Activated CD8-positive, alpha-beta T cell treated with anti-CD3 and anti-CD28 coated beads, Interleukin-2, amount 10 ng/mL, durations not matched to agents 7 days and 5 days (primary cell): ENCODE measurements at regions of chr1 and their contacts with region 1.

Region 1: DNA sequence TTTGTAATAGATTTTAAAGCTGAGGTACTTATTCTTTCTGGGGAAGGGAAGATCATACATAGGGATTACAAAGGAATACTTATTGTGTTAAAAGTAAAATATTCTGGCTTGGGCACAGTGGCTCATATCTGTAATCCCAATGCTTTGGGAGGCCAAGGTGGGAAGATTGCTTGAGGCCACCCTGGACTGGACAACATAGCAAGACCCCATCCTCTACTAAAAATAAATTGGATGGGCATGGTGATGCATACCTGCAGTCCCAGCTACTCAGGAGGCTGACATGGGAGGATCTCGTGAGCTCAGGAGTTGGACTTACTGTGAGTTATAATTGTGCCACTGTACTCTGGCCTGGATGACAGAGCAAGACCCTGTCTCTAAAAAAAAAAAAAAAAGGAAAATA is 27.6 kb downstream of the GABPB2 start:
- DNase-seq: no peak
- ATAC-seq: no peak
- H3K4me3 Mint-ChIP-seq: no peak overlapping the region
- H3K27ac Mint-ChIP-seq: no peak overlapping the region
- H3K4me1 Mint-ChIP-seq: no peaks in the 10 kb centered on the region
- H3K27me3 Mint-ChIP-seq: no peaks in the 10 kb centered on the region

Region 2: DNA sequence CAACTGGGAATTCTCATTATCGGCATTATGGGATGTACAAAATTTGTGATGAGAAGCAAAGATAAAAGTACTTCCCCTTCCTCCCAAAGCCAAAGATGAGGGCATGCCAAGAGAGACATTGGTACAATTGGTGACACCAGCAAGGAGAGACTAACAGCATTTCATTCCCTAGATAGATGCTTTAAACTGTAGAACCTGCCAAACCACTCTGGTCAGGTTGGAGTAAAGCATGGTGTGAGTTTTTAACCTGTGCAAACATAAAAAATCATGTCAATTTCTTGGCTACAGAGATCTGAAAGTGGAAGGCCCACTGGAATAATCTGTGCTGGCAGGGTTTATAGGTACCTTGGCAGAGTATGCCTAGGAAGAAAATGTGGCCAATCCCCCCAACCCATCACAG is 191.8 kb before region 1 on chr1:
- CTCF ChIA-PET with region 1: no interaction called
- POLR2A ChIA-PET with region 1: no interaction called
- DNase-seq: no peak
- ATAC-seq: no peak
- H3K4me3 Mint-ChIP-seq: no peak overlapping the region
- H3K27ac Mint-ChIP-seq: no peak overlapping the region
- H3K4me1 Mint-ChIP-seq: no peaks in the 10 kb centered on the region
- H3K27me3 Mint-ChIP-seq: peaks cover 2% of the 10 kb centered on the region

Region 3: DNA sequence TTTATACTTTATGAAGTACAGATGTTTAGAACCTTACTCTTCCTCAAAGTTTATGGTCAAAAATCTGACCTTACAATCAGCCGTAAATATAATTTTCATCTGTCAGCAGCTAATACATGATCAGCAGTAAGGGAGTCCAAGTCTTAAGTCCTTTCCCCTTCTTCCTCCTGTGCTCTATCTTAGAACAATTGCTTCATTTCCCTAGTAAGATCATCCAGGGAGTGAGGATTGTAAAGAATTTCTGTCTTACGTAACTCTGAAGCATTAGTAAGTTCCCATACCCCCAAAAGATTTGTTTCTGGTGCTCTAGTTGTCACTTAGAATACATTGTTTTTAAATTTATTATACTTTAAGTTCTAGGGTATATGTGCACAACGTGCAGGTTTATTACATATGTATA is 169.8 kb before region 1 on chr1:
- CTCF ChIA-PET with region 1: no interaction called
- POLR2A ChIA-PET with region 1: no interaction called
- DNase-seq: no peak
- ATAC-seq: no peak
- H3K4me3 Mint-ChIP-seq: peak overlapping the region; percentile 27
- H3K27ac Mint-ChIP-seq: no peak overlapping the region
- H3K4me1 Mint-ChIP-seq: peaks cover 14% of the 10 kb centered on the region
- H3K27me3 Mint-ChIP-seq: no peaks in the 10 kb centered on the region

Region 4: GRCh38 chr1:151070474-151071276 is 27.5 kb before region 1 on chr1 and contains the start of gene GABPB2:
- CTCF ChIA-PET with region 1: interaction called, 18 read pairs
- POLR2A ChIA-PET with region 1: no interaction called
- DNase-seq: peak; percentile 88
- ATAC-seq: peak; percentile 87
- H3K4me3 Mint-ChIP-seq: peak within 1 kb of the TSS; percentile 98
- H3K27ac Mint-ChIP-seq: peak within 1 kb of the TSS; percentile 100
- H3K4me1 Mint-ChIP-seq: peaks cover 15% of the 10 kb centered on the region
- H3K27me3 Mint-ChIP-seq: no peaks in the 10 kb centered on the region
- total RNA-seq, gene GABPB2: 32.7 to 34.4 TPM

Region 5: DNA sequence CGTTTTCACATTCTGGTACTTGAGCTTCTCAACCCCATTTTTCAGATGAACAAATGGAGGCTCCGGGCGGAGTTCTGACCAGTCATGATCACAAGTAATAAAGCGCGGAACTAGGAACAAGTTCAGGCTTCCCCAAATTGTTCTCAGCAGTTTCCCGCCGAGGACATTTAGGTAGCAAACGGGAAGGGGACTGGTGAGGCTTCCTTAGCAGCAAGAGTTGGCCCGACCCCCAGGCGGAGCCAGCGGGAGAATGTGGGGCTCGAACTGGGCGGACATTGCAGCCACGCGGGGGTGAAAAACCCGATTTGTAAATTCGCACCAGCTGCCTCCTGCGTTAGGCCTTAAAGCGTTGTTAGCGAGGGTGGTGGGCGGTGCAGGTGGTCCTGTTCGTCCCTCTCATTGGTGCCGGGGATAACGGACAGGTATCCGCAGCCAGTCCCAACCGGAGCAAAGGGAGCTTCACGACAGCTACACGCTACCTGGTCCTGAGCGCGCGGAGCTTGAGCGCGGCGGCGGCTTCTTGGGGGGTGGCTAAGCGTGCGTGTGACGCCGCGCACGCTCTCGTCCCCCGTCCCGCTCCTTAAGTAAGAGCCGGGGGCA is 33.0 kb after region 1 on chr1:
- CTCF ChIA-PET with region 1: interaction called, 22 read pairs
- POLR2A ChIA-PET with region 1: no interaction called
- DNase-seq: peak; percentile 88
- ATAC-seq: peak; percentile 100
- H3K4me3 Mint-ChIP-seq: peak overlapping the region; percentile 69
- H3K27ac Mint-ChIP-seq: peak overlapping the region; percentile 68
- H3K4me1 Mint-ChIP-seq: peaks cover 25% of the 10 kb centered on the region
- H3K27me3 Mint-ChIP-seq: peaks cover 3% of the 10 kb centered on the region

Region 6: GRCh38 chr1:151156515-151156819 is 58.3 kb after region 1 on chr1 and contains the start of gene TNFAIP8L2:
- CTCF ChIA-PET with region 1: interaction called, 337 read pairs
- POLR2A ChIA-PET with region 1: interaction called, 10 read pairs
- DNase-seq: peak; percentile 89
- ATAC-seq: peak; percentile 89
- H3K4me3 Mint-ChIP-seq: peak within 1 kb of the TSS; percentile 100
- H3K27ac Mint-ChIP-seq: peak within 1 kb of the TSS; percentile 98
- H3K4me1 Mint-ChIP-seq: peaks cover 55% of the 10 kb centered on the region
- H3K27me3 Mint-ChIP-seq: no peaks in the 10 kb centered on the region
- total RNA-seq, gene TNFAIP8L2: 18.5 to 20.0 TPM

Region 7: GRCh38 chr1:151189638-151190445 is 91.7 kb after region 1 on chr1 and contains the start of gene VPS72:
- CTCF ChIA-PET with region 1: interaction called, 10 read pairs
- POLR2A ChIA-PET with region 1: interaction called, 3 read pairs
- DNase-seq: peak; percentile 92
- ATAC-seq: peak; percentile 96
- H3K4me3 Mint-ChIP-seq: peak within 1 kb of the TSS; percentile 100
- H3K27ac Mint-ChIP-seq: peak within 1 kb of the TSS; percentile 99
- H3K4me1 Mint-ChIP-seq: peaks cover 28% of the 10 kb centered on the region
- H3K27me3 Mint-ChIP-seq: peaks cover 3% of the 10 kb centered on the region
- total RNA-seq, gene VPS72: 59.8 to 61.7 TPM

Region 8: GRCh38 chr1:151340870-151341754 is 243.0 kb after region 1 on chr1:
- CTCF ChIA-PET with region 1: interaction called, 10 read pairs
- POLR2A ChIA-PET with region 1: no interaction called
- DNase-seq: peak; percentile 68
- ATAC-seq: peak; percentile 80
- H3K4me3 Mint-ChIP-seq: no peak overlapping the region
- H3K27ac Mint-ChIP-seq: peak overlapping the region; percentile 0
- H3K4me1 Mint-ChIP-seq: peaks cover 18% of the 10 kb centered on the region
- H3K27me3 Mint-ChIP-seq: no peaks in the 10 kb centered on the region